GM10248 (cell line): ENCODE measurements at regions of chr4 and their contacts with region 1.

Region 1: DNA sequence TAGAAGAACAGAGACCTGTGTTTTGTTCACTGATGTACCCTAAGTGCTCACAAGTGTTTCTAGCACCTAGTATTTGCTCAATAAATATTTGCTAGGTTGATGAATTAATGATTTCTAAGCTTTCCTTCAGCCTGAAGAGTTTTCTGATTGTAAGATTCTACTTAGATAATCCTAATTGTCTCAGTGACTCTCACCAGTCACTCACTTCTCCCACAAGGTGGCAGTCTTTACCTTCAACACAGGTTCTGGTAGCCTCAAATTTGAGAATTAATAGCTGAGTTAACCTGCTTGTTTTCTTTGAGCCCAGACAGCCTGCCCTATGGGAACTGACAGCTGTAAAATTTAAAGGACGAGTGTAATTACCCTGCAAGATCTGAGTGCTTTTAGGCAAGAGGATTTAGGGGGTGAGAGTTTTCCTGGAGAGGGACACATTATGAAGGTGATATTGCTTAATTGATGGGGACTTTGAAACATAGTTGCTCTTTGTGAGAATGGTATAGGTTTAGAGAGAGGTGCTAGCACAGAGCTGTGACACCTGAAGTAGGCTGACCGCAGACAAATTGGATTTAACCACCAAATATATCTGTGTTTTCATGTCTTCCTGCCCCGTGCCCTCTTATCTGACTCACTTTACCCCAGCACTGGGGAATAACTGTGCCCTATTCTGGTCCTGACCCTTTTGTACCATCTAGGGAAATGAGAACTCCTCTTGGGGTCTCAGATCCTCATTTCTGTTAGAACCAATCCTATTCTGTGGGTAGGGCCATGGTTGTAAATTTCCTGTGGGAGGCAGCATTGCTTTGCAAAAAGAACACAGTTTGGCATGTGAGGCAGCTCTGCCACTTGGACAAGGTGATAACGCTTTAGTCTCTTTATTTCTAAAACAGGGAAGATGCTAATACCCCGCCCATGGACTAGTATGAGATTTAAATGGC is 27.7 kb downstream of the CD38 start:
- DNase-seq: no peak
- CTCF ChIP-seq: peak; percentile 76

Region 2: DNA sequence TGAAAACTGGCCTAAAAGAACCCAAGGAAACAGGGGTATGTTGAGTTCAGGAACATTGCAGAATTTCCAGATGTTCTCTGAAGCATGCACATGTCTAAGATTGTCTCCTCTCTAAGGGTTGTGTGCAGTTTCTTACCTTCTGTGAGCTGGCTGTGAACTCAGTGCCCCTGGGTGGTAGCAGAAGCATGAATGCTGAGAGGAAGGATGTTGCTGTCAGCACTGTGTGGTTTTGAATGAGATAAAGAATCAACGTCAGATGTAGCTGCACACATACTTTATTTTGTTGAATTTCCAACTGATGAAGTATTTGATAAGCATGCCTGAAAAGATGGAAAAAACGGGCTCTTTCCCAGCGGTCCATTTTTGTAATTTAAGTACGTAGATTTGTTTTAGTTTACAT is 51.5 kb before region 1 on chr4:
- CTCF ChIA-PET with region 1: no interaction called
- POLR2A ChIA-PET with region 1: no interaction called
- DNase-seq: no peak
- CTCF ChIP-seq: no peak

Region 3: DNA sequence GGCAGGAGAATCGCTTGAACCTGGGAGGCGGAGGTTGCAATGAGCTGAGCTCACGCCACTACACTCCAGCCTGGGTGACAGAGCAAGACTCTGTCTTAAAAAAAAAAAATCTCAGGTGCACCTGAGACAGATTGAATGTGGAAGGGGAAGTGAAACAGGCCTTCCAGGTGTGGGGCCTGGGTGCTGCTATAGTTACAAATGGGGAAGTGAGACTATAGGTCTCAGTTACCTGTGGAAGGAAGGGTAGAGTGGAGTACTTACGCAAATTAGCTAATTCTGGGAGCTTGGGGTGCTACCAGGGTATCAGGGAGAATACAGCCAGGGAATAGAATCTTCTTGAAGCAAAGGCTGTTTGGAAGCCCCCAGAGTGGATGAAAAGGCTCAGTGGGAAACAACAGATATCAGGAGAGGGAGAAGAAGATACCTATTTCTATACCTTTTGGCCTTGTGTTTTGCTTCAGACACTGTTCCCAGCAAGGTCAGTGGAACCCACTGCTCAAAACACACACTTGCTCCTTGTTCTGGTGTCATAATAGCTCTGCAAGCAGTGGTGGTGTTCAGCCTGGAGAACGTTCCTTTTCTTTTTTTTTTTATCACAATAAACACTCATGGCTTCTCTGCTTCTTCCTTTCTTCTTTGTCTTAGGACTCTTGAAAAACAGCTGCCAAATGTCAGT is 20.8 kb before region 1 on chr4:
- CTCF ChIA-PET with region 1: interaction called, 38 read pairs
- POLR2A ChIA-PET with region 1: no interaction called
- DNase-seq: peak; percentile 60
- CTCF ChIP-seq: no peak

Region 4: GRCh38 chr4:15793506-15794363 is 12.1 kb before region 1 on chr4:
- CTCF ChIA-PET with region 1: interaction called, 38 read pairs
- POLR2A ChIA-PET with region 1: no interaction called
- DNase-seq: no peak
- CTCF ChIP-seq: no peak

Region 5: GRCh38 chr4:15956179-15956850 is 150.5 kb after region 1 on chr4:
- CTCF ChIA-PET with region 1: interaction called, 91 read pairs
- POLR2A ChIA-PET with region 1: no interaction called
- DNase-seq: peak; percentile 77
- CTCF ChIP-seq: peak; percentile 81

Region 6: DNA sequence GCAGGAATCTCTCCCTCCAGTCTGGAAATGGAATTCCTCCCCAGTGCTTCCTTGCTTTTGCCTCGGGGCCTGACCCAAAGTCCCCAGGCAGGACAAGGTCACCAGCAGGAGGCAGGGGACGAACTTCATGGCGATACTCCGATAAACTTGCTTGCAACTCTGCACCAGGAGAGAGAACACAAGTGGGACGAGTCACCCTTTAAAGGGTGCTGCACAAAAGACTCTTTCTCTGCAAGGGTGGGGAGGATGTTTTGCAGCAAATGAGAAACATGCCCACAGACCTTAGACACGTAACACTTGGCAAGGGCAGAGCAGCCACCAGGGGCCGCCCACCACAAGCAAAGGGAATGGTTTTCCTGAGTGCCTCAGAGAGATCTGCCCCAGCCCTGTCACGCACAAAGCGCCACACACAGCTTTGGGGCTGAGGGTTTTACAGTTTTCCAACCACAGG is 157.2 kb after region 1 on chr4 and contains the start of gene FGFBP2:
- CTCF ChIA-PET with region 1: interaction called, 10 read pairs
- POLR2A ChIA-PET with region 1: no interaction called
- DNase-seq: peak; percentile 28
- CTCF ChIP-seq: no peak

Region 7: DNA sequence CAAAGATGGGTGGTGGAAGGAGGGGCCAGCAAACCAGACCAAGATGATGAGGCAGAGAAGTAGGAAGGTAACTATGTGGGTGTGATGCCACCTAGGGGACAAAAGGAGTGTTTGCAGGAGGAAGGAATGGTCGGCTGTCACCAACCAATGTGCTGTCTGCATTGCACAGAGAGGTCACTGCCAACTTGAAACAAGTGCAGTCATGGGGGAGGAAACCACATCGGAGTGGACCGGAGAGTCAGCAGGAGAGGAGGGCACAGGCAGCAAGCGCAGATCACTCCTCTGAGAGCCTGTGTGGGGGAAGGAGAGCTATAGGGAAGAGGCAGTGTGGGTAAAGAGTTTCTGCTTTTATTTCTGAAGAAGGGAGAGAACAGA is 195.6 kb after region 1 on chr4:
- CTCF ChIA-PET with region 1: interaction called, 95 read pairs
- POLR2A ChIA-PET with region 1: no interaction called
- DNase-seq: peak; percentile 76
- CTCF ChIP-seq: peak; percentile 75

Region 8: GRCh38 chr4:16006791-16007446 is 201.1 kb after region 1 on chr4:
- CTCF ChIA-PET with region 1: interaction called, 95 read pairs
- POLR2A ChIA-PET with region 1: no interaction called
- DNase-seq: no peak
- CTCF ChIP-seq: no peak